ENCODE measurements at regions of chr15 and their contacts with region 1.

Region 1: DNA sequence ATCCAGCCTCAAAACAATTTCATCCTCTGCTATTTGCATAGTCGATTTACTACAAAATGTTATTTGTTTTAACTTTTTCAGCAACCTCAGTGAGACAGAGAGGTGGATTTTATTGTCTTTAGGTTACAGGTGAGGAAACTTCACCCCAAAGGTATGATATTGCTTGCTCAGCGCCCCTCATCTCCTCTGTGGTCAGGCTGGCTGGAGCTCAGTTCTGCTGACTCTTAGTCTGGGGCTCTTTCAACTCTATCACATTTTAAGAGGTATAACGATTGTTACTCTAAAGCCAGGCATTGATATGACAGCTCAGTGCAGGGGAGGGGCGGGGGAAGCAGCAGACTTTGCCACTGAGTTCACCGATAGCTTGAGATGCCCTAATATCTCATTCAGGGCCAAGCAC is 103.0 kb upstream of the DPH6 start:
- DNase-seq: no peak
- ATAC-seq: no peak
- H3K4me3 ChIP-seq: no peak overlapping the region
- H3K27ac ChIP-seq: no peak overlapping the region
- H3K4me1 ChIP-seq: no peaks in the 10 kb centered on the region
- H3K27me3 ChIP-seq: no peaks in the 10 kb centered on the region

Region 2: DNA sequence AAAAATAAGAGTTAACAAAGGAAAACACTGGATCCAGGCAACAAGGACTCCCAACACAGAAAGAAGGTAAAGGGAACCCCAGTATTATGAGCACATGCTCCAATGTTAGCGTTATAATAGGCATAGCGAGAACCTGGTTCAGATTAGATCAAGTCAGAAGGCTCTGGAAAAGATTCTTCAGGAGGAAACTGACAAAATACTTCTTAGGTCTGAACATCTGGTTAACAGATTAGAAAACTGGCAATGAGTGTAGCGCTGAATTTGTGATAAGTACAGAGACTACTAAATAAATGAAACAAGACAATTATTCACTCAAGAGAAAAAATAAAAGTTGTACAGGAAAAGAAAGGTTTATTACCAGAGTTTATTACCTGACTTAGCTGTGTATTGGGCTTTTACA is 249.0 kb before region 1 on chr15:
- intact Hi-C with region 1: no loop called
- DNase-seq: no peak
- ATAC-seq: no peak
- H3K4me3 ChIP-seq: no peak overlapping the region
- H3K27ac ChIP-seq: no peak overlapping the region
- H3K4me1 ChIP-seq: no peaks in the 10 kb centered on the region
- H3K27me3 ChIP-seq: no peaks in the 10 kb centered on the region

Region 3: GRCh38 chr15:35583863-35584528 is 64.9 kb before region 1 on chr15:
- intact Hi-C with region 1: no loop called
- DNase-seq: no peak
- ATAC-seq: peak; percentile 91 to 95
- H3K4me3 ChIP-seq: no peak overlapping the region
- H3K27ac ChIP-seq: peak overlapping the region; percentile 73
- H3K4me1 ChIP-seq: peaks cover 3% of the 10 kb centered on the region
- H3K27me3 ChIP-seq: no peaks in the 10 kb centered on the region

Region 4: GRCh38 chr15:35705884-35706585 is 57.1 kb after region 1 on chr15:
- intact Hi-C with region 1: loop called in 1 of 4 experiments (anchors 10 kb)
- DNase-seq: no peak
- ATAC-seq: peak; percentile 95 to 96
- H3K4me3 ChIP-seq: no peak overlapping the region
- H3K27ac ChIP-seq: peak overlapping the region; percentile 96
- H3K4me1 ChIP-seq: peaks cover 4% of the 10 kb centered on the region
- H3K27me3 ChIP-seq: no peaks in the 10 kb centered on the region